ENCODE measurements at regions of chr2 and their contacts with region 1.

Region 1: GRCh38 chr2:28392297-28393113 is at the start of gene FOSL2:
- DNase-seq: peak; percentile 100
- H3K4me3 ChIP-seq: peak within 1 kb of the TSS; percentile 80 to 93 (median 83)
- H3K27ac ChIP-seq: peak within 1 kb of the TSS; percentile 95
- H3K4me1 ChIP-seq: peaks cover 36% of the 10 kb centered on the region
- H3K27me3 ChIP-seq: no peaks in the 10 kb centered on the region
- CTCF ChIP-seq: peak in 1 of 2 donors; percentile 6
- total RNA-seq, gene FOSL2: 89.9 to 92.9 TPM

Region 2: DNA sequence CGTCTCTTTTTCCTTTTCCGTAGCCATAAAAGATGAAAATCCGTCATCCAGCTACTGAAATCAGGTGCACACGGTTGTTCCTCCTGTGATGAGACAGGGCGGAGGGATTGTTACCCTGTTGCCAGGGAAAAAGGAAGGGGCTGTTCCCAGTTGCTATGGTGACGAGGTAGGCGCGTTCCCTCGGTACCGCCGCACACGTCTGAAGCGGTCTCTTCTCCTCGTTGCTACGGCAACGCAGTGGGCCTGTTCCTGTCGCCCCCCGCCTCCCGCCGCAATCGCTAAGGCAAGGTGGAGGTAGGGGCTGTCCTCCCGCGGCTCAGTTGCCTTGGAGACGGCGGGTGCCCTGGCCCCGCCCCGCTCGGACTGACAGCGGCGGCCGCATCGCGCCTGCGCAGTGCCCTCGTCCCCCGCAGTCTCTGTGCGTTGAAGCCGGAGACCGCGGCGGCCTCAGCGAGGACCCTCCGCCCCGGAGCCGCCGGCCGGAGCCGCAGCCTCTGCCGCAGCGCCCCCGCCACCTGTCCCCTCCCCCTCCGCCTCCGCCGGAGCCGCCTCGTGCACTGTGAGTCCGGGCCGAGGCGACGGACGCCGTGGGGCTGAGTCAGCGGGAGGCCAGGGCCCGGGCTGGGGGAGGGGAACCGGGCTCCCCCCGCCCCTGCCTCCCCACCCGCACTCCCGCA is 1422.1 kb before region 1 on chr2 and contains the start of gene MAPRE3:
- CTCF ChIA-PET with region 1: no interaction called
- dilution Hi-C with region 1: no loop called
- in situ Hi-C with region 1: no loop called
- intact Hi-C with region 1: no loop called
- DNase-seq: peak; percentile 81
- H3K4me3 ChIP-seq: peak within 1 kb of the TSS; percentile 61 to 94 (median 93)
- H3K27ac ChIP-seq: peak within 1 kb of the TSS; percentile 83
- H3K4me1 ChIP-seq: peaks cover 13% of the 10 kb centered on the region
- H3K27me3 ChIP-seq: no peaks in the 10 kb centered on the region
- CTCF ChIP-seq: no peak
- total RNA-seq, gene MAPRE3: 10.2 to 25.0 TPM

Region 3: DNA sequence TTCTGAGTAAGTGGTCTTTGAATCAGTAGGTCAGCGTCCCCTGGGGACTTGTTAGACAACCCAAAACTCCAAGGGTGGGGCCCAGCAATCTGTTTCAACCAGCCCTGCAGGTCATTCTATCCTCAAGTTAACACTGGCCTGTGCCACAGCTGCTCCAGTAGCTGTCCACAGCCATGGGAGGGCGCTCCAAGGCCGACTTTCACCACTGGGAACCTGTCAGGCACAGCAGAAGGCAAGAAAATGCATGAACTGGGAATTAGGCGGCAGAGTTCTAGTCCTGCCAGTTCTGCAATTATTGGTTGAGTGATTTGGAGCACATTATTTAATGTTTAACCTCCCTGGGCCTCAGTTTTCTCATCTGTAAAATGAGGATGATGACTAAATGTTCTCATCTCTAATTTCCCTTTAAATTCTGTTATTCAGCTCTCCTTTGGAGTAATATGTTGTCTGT is 638.3 kb before region 1 on chr2:
- CTCF ChIA-PET with region 1: interaction called, 3 read pairs
- dilution Hi-C with region 1: no loop called
- in situ Hi-C with region 1: loop called in 1 of 2 experiments (anchors 25 kb)
- intact Hi-C with region 1: loop called (anchors 1 kb)
- DNase-seq: peak; percentile 76
- H3K4me3 ChIP-seq: no peak overlapping the region
- H3K27ac ChIP-seq: peak overlapping the region; percentile 91
- H3K4me1 ChIP-seq: peaks cover 21% of the 10 kb centered on the region
- H3K27me3 ChIP-seq: no peaks in the 10 kb centered on the region
- CTCF ChIP-seq: peak; percentile 97 to 99

Region 4: DNA sequence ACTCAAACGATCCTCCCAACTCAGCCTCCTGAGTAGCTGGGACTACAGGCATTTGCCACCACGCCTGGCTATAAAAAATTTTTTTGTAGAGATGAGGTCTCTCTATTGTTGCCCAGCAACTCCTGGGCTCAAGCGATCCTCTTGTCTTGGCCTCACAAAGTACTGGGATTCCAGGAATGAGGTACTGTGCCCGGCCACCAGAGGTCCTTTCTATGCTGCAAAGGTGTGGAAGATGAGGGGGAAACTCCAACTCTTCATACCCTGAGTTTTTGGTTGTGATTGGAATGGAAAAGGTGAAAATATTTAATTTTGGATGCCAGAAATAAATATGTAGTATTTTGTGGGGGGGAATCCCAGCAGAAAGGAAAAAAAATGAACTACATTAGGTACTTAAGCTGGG is 585.0 kb before region 1 on chr2:
- CTCF ChIA-PET with region 1: no interaction called
- dilution Hi-C with region 1: no loop called
- in situ Hi-C with region 1: no loop called
- intact Hi-C with region 1: loop called (anchors 1 kb)
- DNase-seq: peak; percentile 35
- H3K4me3 ChIP-seq: no peak overlapping the region
- H3K27ac ChIP-seq: no peak overlapping the region
- H3K4me1 ChIP-seq: peaks cover 28% of the 10 kb centered on the region
- H3K27me3 ChIP-seq: no peaks in the 10 kb centered on the region
- CTCF ChIP-seq: peak; percentile 62 to 75

Region 5: GRCh38 chr2:27989141-27989540 is 403.4 kb before region 1 on chr2:
- CTCF ChIA-PET with region 1: no interaction called
- dilution Hi-C with region 1: no loop called
- in situ Hi-C with region 1: no loop called
- intact Hi-C with region 1: loop called (anchors 10 kb)
- DNase-seq: peak; percentile 97
- H3K4me3 ChIP-seq: no peak overlapping the region
- H3K27ac ChIP-seq: peak overlapping the region; percentile 87
- H3K4me1 ChIP-seq: peaks cover 41% of the 10 kb centered on the region
- H3K27me3 ChIP-seq: no peaks in the 10 kb centered on the region
- CTCF ChIP-seq: peak in 1 of 2 donors; percentile 6

Region 6: GRCh38 chr2:28175028-28175427 is 217.5 kb before region 1 on chr2:
- CTCF ChIA-PET with region 1: no interaction called
- dilution Hi-C with region 1: no loop called
- in situ Hi-C with region 1: loop called in 1 of 2 experiments (anchors 10 kb)
- intact Hi-C with region 1: loop called (anchors 2 kb)
- DNase-seq: no peak
- H3K4me3 ChIP-seq: no peak overlapping the region
- H3K27ac ChIP-seq: no peak overlapping the region
- H3K4me1 ChIP-seq: peaks cover 25% of the 10 kb centered on the region
- H3K27me3 ChIP-seq: no peaks in the 10 kb centered on the region
- CTCF ChIP-seq: peak; percentile 19 to 28

Region 7: DNA sequence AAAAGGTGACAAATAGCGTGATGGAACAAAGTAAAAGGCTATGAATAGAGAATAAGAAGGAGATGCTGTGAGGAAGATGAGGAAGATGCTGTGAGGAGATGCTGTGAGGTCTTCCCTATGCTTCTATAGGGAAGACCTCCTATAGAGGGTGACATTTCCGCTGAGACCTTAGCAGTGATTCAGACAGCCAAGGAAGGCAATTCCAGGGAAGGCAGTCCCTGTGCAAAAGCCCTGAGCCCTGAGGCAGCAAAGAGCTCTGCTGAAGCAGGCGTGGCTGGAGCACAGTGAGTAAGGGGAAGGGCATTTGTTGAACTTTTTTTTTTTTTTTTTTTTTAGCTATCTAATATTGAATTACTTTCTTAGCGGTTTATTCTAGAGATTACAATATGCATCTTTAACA is 142.5 kb before region 1 on chr2:
- CTCF ChIA-PET with region 1: interaction called, 3 read pairs
- dilution Hi-C with region 1: no loop called
- in situ Hi-C with region 1: no loop called
- intact Hi-C with region 1: loop called (anchors 1 kb)
- DNase-seq: peak; percentile 80
- H3K4me3 ChIP-seq: no peak overlapping the region
- H3K27ac ChIP-seq: no peak overlapping the region
- H3K4me1 ChIP-seq: peaks cover 6% of the 10 kb centered on the region
- H3K27me3 ChIP-seq: no peaks in the 10 kb centered on the region
- CTCF ChIP-seq: peak in 1 of 2 donors; percentile 10

Region 8: DNA sequence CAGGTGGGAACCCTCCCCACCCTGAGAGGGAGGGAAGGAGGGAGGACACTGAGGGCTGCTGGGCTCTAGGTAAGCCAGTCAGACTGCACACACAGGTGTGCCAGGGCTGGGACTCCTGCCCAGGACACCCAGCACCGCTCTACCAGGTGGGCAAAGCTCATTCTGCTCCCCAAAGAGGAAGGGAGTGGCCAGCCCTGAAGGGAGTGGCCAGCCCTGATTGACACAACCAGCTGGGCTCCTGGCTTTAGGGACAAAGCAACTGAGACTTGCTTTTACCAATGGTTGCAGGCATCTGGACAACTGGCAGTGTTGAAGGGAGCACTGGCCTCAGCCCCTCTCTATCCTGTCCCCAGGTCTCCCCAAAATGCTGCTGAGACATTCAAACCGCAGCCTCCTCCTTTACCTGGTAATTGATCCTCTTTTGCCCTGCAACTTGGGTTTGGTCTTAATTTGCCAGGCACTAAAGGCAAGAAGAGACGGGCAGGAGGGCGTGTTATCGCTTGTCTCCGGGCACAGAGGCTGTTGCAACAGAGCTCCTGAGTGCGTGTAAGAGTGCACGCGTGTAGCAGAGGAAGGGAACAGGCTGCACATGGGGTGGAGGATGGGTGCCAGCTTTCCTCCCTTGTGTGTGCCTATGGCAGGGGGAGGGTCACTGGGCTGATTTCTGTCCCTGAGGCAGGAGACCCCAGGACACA is 14.4 kb before region 1 on chr2:
- CTCF ChIA-PET with region 1: no interaction called
- dilution Hi-C with region 1: no loop called
- in situ Hi-C with region 1: no loop called
- intact Hi-C with region 1: loop called (anchors 1 kb)
- DNase-seq: peak; percentile 85
- H3K4me3 ChIP-seq: peak overlapping the region; percentile 9 to 24 (median 20)
- H3K27ac ChIP-seq: peak overlapping the region; percentile 71
- H3K4me1 ChIP-seq: peaks cover 29% of the 10 kb centered on the region
- H3K27me3 ChIP-seq: no peaks in the 10 kb centered on the region
- CTCF ChIP-seq: no peak

Measured in mammary epithelial cell (primary cell).